Dorsolateral prefrontal cortex (tissue), 120 donors: ENCODE measurements at regions of chr6 and their contacts with region 1.

Region 1: DNA sequence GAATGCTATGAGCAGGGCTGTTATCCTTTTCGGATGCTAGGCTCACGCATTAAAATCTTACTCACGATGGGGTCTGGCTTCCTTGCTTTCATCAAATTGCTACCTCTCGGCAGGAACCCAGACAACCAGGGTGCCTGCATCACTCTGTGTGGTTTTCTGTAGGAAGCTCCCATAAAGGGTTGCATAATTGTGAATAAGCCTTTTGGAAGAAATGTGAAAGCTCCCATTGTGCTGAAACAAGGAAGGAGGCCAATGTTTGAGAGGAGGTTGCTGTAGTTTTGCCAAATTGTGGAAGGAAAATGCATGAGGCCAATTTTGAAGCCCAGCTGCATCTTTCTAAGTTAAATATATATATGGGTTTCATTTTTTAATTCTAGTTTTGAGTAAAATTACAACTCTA is 615.5 kb downstream of the C6orf118 start:
- DNase-seq: peak in 7 of 10 donors; percentile 30 to 62 (median 50)
- H3K4me3 ChIP-seq: peak overlapping the region in 34 of 59 donors; percentile 2 to 55 (median 27)
- H3K27ac ChIP-seq: peak overlapping the region in 51 of 59 donors; percentile 1 to 82 (median 59)
- H3K27me3 ChIP-seq: no peaks in the 10 kb centered on the region
- CTCF ChIP-seq: peak in 10 of 56 donors; percentile 8 to 43 (median 24)

Region 2: GRCh38 chr6:164085091-164086075 is 608.6 kb before region 1 on chr6:
- intact Hi-C with region 1: loop called in 1 of 2 experiments (anchors 10 kb)
- DNase-seq: peak; percentile 21 to 95 (median 93)
- H3K4me3 ChIP-seq: peak overlapping the region in 57 of 59 donors; percentile 7 to 64 (median 44)
- H3K27ac ChIP-seq: peak overlapping the region in 58 of 59 donors; percentile 1 to 90 (median 76)
- H3K27me3 ChIP-seq: peaks cover 0 to 5% (median 0%) of the 10 kb centered on the region in 45 donors
- CTCF ChIP-seq: peak in 16 of 56 donors; percentile 7 to 36 (median 20)

Region 3: DNA sequence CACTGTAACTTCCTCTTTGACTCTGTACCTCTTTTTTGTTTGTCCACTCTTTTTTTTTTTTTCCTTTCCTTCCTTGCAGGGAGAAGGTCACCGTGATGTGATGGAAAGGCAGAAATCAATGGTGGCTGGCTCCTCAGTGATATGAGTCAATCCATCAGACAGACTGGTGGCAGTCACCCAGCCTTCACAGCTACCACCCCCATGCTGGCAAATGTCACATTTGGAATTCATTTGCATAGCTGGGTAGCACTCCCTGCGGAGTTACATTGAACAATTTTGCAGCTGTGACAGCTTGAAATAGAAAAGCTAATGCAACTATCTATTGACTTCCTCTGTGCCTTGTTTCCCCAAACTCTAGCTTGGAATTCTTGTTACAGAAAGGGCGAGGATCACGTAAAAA is 53.0 kb before region 1 on chr6:
- intact Hi-C with region 1: loop called in 1 of 2 experiments (anchors 5 kb)
- DNase-seq: peak in 8 of 10 donors; percentile 47 to 74 (median 59)
- H3K4me3 ChIP-seq: peak overlapping the region in 6 of 59 donors; percentile 2 to 29 (median 19)
- H3K27ac ChIP-seq: peak overlapping the region in 14 of 59 donors; percentile 9 to 55 (median 38)
- H3K27me3 ChIP-seq: no peaks in the 10 kb centered on the region
- CTCF ChIP-seq: no peak

Region 4: DNA sequence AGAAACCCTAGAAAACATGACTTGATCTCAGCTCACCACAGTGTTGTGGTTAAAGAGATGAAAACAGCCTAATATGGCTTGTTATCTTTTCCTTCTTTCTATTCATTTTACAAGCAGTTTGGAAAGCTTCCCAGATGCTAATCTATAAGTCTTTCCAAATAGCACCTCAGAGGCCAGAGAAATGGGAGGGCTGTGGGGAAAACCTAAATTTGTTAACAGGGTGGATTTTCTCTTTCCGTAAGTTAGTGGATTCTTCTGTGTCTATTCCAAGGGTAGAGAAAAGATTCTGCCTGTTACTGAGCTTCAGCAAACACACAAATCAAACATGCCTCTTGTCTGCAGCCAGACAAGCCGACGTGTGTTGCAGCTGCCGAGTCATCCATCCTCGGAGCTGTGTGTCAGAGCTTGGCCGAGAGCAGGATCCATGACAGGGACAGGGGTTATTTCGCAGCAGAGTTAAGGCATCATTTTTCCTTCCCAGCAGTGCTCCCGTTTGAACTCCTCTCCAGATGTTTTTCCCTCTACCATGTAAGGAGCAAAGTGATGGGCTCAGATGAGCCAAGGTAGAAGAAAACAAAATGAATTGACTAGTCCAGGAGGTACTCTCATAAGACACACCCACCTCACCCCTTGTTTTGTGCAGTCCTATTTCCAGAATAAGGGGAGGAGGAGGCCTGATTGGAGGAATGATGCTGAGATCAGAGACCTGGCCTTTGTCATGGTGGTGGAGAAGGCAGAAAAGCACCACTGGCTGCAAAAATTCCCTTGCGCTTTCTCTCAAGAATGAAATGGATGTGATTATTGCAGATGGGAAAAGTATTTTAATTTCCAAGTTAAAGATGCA is 55.5 kb after region 1 on chr6:
- intact Hi-C with region 1: loop called in 1 of 2 experiments (anchors 5 kb)
- DNase-seq: peak in 7 of 10 donors; percentile 32 to 74 (median 47)
- H3K4me3 ChIP-seq: peak overlapping the region in 21 of 59 donors; percentile 2 to 48 (median 16)
- H3K27ac ChIP-seq: peak overlapping the region in 41 of 59 donors; percentile 2 to 76 (median 43)
- H3K27me3 ChIP-seq: no peaks in the 10 kb centered on the region
- CTCF ChIP-seq: no peak

Region 5: GRCh38 chr6:164832429-164832840 is 138.5 kb after region 1 on chr6:
- intact Hi-C with region 1: loop called in 1 of 2 experiments (anchors 5 kb)
- DNase-seq: peak in 5 of 10 donors; percentile 27 to 66 (median 53)
- H3K4me3 ChIP-seq: peak overlapping the region in 3 of 59 donors; percentile 26 to 37 (median 30)
- H3K27ac ChIP-seq: peak overlapping the region in 44 of 59 donors; percentile 1 to 84 (median 50)
- H3K27me3 ChIP-seq: no peaks in the 10 kb centered on the region
- CTCF ChIP-seq: peak in 2 of 56 donors; percentile 9 to 43

Region 6: DNA sequence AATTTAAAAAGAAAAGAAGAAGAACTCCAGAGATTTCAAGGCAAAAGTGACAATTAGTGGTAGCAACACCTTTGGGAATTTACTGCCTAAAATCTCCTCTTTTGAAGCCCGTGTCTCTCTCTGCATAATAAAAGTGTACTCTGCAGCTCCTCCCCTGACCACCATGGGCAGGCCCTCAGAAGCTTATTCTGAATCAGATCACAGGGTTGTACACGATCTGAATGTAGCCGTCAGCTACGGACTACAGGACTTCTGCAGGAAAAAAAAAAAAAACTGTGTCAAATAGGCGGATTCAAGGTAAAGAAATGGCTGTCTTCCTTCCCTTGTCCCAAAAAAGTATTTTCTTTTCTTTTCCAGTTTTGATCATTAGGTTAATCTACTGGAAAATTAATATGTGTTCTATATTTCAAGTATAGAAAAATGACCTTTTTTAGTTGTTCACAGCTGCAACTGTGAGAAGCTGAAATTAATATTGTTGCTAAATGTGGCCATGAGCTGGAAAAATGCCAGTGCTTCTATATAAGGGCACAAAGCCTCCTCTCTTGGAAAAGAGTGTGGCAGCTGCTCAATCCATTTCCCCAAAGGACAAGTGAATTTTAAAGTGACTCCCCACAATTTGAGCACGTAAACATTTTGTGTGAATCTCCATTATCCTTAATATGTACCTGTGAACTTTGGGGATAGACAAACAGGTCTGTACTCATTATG is 218.1 kb after region 1 on chr6:
- intact Hi-C with region 1: loop called in 1 of 2 experiments (anchors 10 kb)
- DNase-seq: no peak
- H3K4me3 ChIP-seq: peak overlapping the region in 57 of 59 donors; percentile 3 to 59 (median 33)
- H3K27ac ChIP-seq: peak overlapping the region in 5 of 59 donors; percentile 8 to 33 (median 18)
- H3K27me3 ChIP-seq: no peaks in the 10 kb centered on the region
- CTCF ChIP-seq: peak in 3 of 56 donors; percentile 10 to 16 (median 11)